ENCODE measurements at regions of chr2 and their contacts with region 1.

Region 1: DNA sequence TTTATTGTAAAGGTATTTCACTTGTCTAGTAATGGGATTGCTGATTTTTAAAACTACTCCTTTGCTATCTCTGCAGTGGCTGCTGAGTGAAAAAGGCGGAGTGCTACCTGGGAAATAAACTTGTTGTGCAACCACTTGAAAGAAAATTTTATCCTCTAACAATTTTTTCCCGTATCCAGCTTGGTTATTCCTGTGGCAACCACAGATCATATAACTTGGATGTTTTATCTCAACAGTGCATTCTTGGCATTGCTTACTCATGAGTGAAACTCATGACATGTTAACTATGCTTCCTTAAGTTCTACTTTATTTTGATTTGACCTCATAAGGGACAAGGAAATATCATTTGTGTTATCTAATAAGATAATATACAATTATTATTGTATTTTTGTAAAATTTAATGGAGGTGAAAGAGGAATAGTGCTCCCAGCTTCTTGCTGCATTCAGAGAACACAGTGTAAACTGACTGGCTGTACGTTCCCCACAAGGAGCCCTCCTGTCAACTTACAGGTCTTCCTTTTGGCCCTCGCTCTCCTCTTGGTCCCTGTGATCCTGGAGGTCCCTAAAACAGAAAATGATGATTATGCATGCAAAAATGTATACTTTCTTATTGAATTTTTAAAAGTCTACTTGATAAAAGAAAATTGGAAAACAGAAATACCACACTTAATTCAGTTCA is 82.7 kb downstream of the COL5A2 start:
- ATAC-seq: no peak
- H3K4me3 ChIP-seq: no peak overlapping the region
- H3K27ac ChIP-seq: no peak overlapping the region
- H3K4me1 ChIP-seq: peaks cover 0 to 2% of the 10 kb centered on the region in 2 donors

Region 2: DNA sequence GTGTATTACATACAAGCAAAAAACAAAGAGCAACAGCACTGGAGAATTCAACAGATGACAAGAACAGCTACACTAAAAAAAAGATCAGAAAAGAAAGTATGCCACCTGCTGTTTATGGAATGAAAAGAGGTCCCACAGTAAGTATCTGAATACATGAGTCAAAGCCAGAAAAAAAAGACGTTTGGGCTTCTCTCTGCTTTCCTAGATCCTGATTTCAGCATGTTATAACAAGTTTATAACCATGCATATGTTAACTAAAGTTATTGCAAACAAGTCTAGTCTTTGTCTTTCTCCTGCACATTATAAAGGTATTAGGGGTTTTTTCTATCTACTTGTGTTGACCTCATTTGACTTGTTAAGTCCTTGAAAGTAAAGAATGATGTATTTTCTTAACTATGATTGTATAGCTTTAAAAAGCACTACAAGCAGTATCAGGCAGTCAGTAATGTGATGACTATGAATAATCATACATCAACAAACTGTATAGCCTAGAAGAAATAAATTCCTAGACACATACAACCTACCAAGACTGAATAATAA is 191.1 kb after region 1 on chr2:
- in situ Hi-C with region 1: loop called in 2 of 9 experiments (anchors 25 kb)
- ATAC-seq: peak in 7 of 8 experiments; percentile 24 to 95 (median 62)
- H3K4me3 ChIP-seq: no peak overlapping the region
- H3K27ac ChIP-seq: no peak overlapping the region
- H3K4me1 ChIP-seq: no peaks in the 10 kb centered on the region

Region 3: GRCh38 chr2:189302274-189302948 is 205.5 kb after region 1 on chr2:
- in situ Hi-C with region 1: loop called in 3 of 9 experiments (anchors 25 kb)
- ATAC-seq: peak in 1 of 8 experiments; percentile 21
- H3K4me3 ChIP-seq: no peak overlapping the region
- H3K27ac ChIP-seq: no peak overlapping the region
- H3K4me1 ChIP-seq: no peaks in the 10 kb centered on the region

Region 4: GRCh38 chr2:189412330-189412953 is 315.5 kb after region 1 on chr2:
- in situ Hi-C with region 1: loop called in 2 of 9 experiments (anchors 25 kb)
- ATAC-seq: peak in 4 of 8 experiments; percentile 32 to 62 (median 36)
- H3K4me3 ChIP-seq: no peak overlapping the region
- H3K27ac ChIP-seq: no peak overlapping the region
- H3K4me1 ChIP-seq: no peaks in the 10 kb centered on the region